ENCODE measurements at regions of chr1 and their contacts with region 1.

Region 1: GRCh38 chr1:64898107-64898845 is 68.1 kb downstream of the JAK1 start:
- DNase-seq: peak; percentile 92
- ATAC-seq: peak; percentile 98
- H3K4me3 ChIP-seq: peak overlapping the region; percentile 8 to 31; a peak in 3 of 4 replicates
- H3K27ac ChIP-seq: peak overlapping the region; percentile 95
- H3K4me1 ChIP-seq: peaks cover 79% of the 10 kb centered on the region
- H3K27me3 ChIP-seq: no peaks in the 10 kb centered on the region
- CTCF ChIP-seq: no peak

Region 2: GRCh38 chr1:64337475-64337874 is 560.8 kb before region 1 on chr1:
- CTCF ChIA-PET with region 1: no interaction called
- POLR2A ChIA-PET with region 1: no interaction called
- in situ Hi-C with region 1: no loop called
- intact Hi-C with region 1: no loop called
- DNase-seq: no peak
- ATAC-seq: no peak
- H3K4me3 ChIP-seq: no peak overlapping the region
- H3K27ac ChIP-seq: peak overlapping the region; percentile 73
- H3K4me1 ChIP-seq: peaks cover 15% of the 10 kb centered on the region
- H3K27me3 ChIP-seq: no peaks in the 10 kb centered on the region
- CTCF ChIP-seq: no peak

Region 3: DNA sequence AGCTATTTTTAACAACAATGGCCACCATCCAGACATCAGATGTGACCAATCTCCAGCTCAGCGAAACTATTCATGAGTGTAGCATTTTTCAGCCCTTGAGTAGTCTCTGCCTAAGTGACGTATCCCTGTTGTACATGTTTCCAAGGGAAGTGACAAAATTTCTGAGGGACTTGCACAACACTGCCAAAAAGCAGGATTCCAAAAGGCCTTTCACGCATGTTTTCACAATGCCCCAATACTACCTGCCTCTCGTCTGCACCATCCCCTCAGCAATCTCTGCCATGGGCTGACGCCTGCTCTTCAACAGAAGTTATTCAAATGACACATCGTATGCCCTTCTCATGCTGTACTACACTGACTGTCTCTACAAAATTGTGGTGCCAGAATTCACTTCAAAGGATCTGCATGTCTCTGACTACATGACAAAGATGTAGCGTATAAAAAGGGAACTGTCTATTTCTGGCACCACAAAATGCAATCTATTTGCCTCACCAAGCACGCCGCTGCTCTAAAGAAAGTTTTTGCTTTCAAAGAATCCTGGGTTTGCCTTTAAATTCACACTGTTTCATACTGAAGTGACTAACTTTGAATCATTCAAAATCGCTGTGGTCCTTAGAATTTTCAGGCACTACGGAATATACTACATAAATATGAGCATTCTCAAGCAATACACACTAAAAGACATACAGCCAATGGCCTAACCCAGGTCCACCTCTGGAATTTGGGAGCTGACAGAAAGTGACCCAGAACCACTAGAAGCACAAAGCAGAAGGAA is 35.2 kb after region 1 on chr1:
- CTCF ChIA-PET with region 1: no interaction called
- POLR2A ChIA-PET with region 1: no interaction called
- in situ Hi-C with region 1: no loop called
- intact Hi-C with region 1: no loop called
- DNase-seq: no peak
- ATAC-seq: peak; percentile 59
- H3K4me3 ChIP-seq: no peak overlapping the region
- H3K27ac ChIP-seq: peak overlapping the region; percentile 49; the same call in 1 of the 2 replicates
- H3K4me1 ChIP-seq: peaks cover 36% of the 10 kb centered on the region
- H3K27me3 ChIP-seq: no peaks in the 10 kb centered on the region
- CTCF ChIP-seq: no peak

Region 4: DNA sequence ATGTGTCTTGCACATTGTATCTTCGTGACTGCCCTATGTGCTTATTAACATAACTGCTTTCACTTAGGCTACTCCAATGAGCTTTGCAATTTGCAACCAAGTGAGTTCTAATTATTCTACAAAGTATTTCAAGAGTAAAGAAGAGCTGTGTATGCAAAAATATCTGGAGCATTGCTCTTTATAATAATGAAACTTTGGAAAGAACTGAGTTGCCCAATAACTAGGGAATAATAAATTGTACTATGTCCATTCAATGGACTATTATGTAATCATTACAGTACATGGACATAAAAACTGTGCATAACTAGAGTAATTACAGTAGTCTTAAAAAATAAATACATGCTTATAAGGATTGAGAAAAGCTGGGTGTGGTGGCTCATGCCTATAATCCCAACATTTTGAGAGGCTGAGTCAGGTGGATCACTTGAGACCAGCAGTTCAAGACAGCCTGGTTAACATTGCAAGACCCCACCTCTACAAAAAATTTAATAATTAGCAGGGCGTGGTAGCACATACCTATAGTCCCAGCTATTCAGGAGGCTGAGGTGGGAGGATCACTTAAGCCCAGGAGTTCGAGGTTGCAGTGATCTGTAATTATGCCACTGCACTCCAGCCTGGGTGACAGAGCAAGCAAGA is 138.4 kb after region 1 on chr1:
- CTCF ChIA-PET with region 1: no interaction called
- POLR2A ChIA-PET with region 1: no interaction called
- in situ Hi-C with region 1: no loop called
- intact Hi-C with region 1: loop called (anchors 10 kb)
- DNase-seq: no peak
- ATAC-seq: no peak
- H3K4me3 ChIP-seq: no peak overlapping the region
- H3K27ac ChIP-seq: no peak overlapping the region
- H3K4me1 ChIP-seq: no peaks in the 10 kb centered on the region
- H3K27me3 ChIP-seq: no peaks in the 10 kb centered on the region
- CTCF ChIP-seq: no peak

Measured in Panc1 (cell line).